Sigmoid colon (tissue), 7 donors: ENCODE measurements at regions of chr6 and their contacts with region 1.

Region 1: DNA sequence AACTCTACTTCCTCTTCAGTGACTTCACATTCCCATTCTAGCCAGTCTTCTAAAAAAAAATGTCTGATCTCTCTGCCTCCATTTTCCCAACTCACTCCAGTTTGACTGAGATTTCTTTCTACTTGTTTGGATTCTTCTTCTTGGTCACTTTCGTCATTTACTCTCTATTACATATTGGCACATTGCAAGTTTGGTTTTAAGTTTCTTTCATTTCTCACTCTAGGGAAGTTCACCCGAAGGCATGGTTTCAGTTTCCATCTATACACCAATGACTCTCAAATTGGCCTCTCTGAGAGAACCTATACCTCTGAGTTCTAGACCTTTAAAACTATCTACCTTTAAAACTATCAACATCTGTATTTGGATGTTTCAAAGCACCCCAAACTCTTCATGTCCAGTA is 51.3 kb downstream of the CD109 start:
- DNase-seq: no peak
- H3K4me3 ChIP-seq: no peak overlapping the region
- H3K27ac ChIP-seq: peak overlapping the region in 1 of 4 donors; percentile 37
- H3K4me1 ChIP-seq: peaks cover 0 to 58% (median 35%) of the 10 kb centered on the region in 4 donors
- H3K27me3 ChIP-seq: no peaks in the 10 kb centered on the region
- CTCF ChIP-seq: no peak
- EP300 ChIP-seq: no peak
- POLR2A ChIP-seq: no peak

Region 2: DNA sequence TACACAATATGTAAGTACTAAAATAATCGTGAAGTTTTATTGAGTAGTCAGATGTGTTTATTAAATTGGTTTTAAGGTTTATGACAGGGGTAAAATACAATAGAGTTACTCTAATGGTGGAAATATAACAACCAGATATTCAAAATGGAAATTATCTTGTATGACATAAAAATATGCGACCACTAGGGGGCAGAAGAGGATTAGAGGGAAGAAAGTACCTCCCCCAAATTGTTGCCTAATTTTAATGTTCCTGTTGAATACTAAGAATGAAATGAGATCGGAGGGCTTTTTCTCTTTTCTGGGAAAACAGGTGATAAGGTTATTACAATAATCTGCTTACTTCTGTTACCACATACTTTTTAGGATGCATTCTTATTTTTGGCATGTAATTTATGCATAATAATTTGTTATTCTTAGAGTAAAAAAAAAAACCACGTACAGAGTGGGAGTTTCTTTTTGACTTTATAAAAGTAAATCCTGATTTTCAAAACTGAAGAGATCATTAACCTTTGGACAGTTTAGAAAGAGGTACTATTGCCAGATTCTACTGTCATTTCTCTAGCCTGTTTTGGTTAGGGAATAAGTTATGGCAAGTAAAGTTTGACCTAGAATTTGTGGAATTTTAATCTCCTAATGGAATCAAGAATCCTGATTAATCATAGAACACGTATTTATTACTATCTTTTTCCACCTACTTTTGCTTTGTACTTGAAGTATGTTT is 107.9 kb after region 1 on chr6:
- intact Hi-C with region 1: loop called (anchors 5 kb)
- DNase-seq: no peak
- H3K4me3 ChIP-seq: peak overlapping the region; percentile 3 to 27 (median 12)
- H3K27ac ChIP-seq: peak overlapping the region in 3 of 4 donors; percentile 45 to 62 (median 57)
- H3K4me1 ChIP-seq: peaks cover 0 to 9% (median 5%) of the 10 kb centered on the region in 4 donors
- H3K27me3 ChIP-seq: no peaks in the 10 kb centered on the region
- CTCF ChIP-seq: peak; percentile 54 to 80 (median 59)
- EP300 ChIP-seq: no peak
- POLR2A ChIP-seq: no peak

Region 3: DNA sequence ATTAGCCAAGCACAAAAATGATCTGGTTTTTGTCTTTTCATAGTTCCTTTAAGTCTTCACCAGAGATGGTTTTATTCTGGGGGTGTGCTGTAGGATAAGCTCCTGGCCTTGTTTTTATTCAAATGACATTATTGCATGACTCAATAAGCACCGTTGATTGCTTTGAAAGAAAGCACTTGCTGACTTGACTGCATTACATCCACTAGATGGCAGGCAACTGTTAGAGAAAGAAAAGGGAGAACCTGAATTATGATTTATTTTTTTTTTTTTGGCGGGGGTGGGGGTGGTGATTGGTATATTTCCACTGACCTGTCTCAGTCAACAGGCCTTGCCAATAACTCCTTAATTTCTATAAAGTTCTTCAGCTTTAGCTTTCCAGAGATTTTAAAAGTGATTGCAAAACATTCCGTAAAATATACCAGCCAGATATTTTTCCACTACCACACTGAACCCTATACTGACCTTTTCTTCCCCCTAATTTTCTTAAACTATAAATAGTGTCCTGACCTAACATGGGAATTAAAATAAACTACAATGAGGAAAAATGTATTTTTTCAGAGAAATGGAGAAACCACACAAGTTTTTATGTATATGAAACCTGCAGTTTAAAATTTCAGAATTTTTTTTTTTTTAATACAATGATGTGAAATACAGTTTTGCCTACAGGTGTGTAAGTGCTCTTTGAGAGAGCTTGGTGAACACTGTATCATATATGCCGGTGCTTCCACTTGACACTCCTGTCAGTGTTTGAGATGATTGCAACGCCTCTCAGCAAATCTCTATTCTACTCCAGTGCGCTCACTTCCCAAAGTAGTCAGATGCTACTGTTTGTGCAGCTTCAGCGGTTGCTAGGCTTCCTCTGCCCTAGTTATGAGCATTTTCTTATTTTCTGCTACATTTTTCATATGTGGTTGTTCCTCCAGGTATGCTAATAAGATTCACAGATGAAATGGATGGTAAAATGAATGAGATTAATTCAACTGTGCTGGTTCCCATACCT is 223.0 kb after region 1 on chr6:
- intact Hi-C with region 1: loop called (anchors 10 kb)
- DNase-seq: no peak
- H3K4me3 ChIP-seq: no peak overlapping the region
- H3K27ac ChIP-seq: no peak overlapping the region
- H3K4me1 ChIP-seq: peaks cover 0 to 31% (median 16%) of the 10 kb centered on the region in 4 donors
- H3K27me3 ChIP-seq: no peaks in the 10 kb centered on the region
- CTCF ChIP-seq: peak; percentile 30 to 61 (median 46)
- EP300 ChIP-seq: no peak
- POLR2A ChIP-seq: no peak